Pancreas (tissue), 10 donors: ENCODE measurements at regions of chr2 and their contacts with region 1.

Region 1: GRCh38 chr2:177604271-177605065 is 211.9 kb downstream of the AGPS start:
- DNase-seq: no peak
- ATAC-seq: peak; percentile 43 to 85 (median 84)
- H3K4me3 ChIP-seq: no peak overlapping the region
- H3K27ac ChIP-seq: no peak overlapping the region
- H3K4me1 ChIP-seq: no peaks in the 10 kb centered on the region
- H3K27me3 ChIP-seq: no peaks in the 10 kb centered on the region
- CTCF ChIP-seq: peak; percentile 28 to 54 (median 40)

Region 2: GRCh38 chr2:177325270-177325929 is 279.1 kb before region 1 on chr2:
- intact Hi-C with region 1: loop called in 1 of 3 experiments (anchors 5 kb)
- DNase-seq: no peak
- ATAC-seq: peak in 2 of 4 donors; percentile 9 to 17
- H3K4me3 ChIP-seq: no peak overlapping the region
- H3K27ac ChIP-seq: no peak overlapping the region
- H3K4me1 ChIP-seq: peaks cover 0 to 4% (median 0%) of the 10 kb centered on the region in 3 donors
- H3K27me3 ChIP-seq: no peaks in the 10 kb centered on the region
- CTCF ChIP-seq: no peak

Region 3: GRCh38 chr2:177489719-177490301 is 114.7 kb before region 1 on chr2:
- intact Hi-C with region 1: loop called in 1 of 3 experiments (anchors 10 kb)
- DNase-seq: no peak
- ATAC-seq: peak in 3 of 4 donors; percentile 56 to 70 (median 69)
- H3K4me3 ChIP-seq: no peak overlapping the region
- H3K27ac ChIP-seq: no peak overlapping the region
- H3K4me1 ChIP-seq: no peaks in the 10 kb centered on the region
- H3K27me3 ChIP-seq: no peaks in the 10 kb centered on the region
- CTCF ChIP-seq: peak in 2 of 4 donors; percentile 22 to 42

Region 4: GRCh38 chr2:177538323-177538722 is 66.1 kb before region 1 on chr2:
- intact Hi-C with region 1: no loop called
- DNase-seq: no peak
- ATAC-seq: no peak
- H3K4me3 ChIP-seq: no peak overlapping the region
- H3K27ac ChIP-seq: no peak overlapping the region
- H3K4me1 ChIP-seq: no peaks in the 10 kb centered on the region
- H3K27me3 ChIP-seq: no peaks in the 10 kb centered on the region
- CTCF ChIP-seq: no peak